ENCODE measurements at regions of chr4 and their contacts with region 1.

Region 1: DNA sequence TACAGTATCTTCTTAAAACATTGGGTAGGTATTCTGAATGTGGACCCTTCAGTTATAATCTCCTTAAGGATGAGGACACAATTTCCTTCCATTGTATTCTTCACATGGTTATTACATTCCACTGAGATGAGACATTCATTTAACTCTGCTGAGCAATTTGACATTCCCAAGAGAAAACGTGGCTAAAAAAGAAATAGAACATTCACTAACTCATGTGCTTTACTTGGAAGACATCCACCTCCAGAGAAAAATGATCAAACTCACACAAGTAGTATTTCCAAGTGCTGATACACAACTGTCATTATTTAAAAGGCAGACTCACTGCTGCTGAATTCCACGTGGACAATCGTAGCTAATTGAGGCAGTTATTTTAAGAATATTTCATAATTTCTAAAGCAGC is 227.9 kb upstream of the ANKRD50 start:
- DNase-seq: no peak
- H3K4me3 Mint-ChIP-seq: no peak overlapping the region
- H3K27ac Mint-ChIP-seq: peak overlapping the region; percentile 36
- H3K4me1 Mint-ChIP-seq: peaks cover 51% of the 10 kb centered on the region
- H3K27me3 Mint-ChIP-seq: no peaks in the 10 kb centered on the region
- CTCF ChIP-seq: no peak

Region 2: DNA sequence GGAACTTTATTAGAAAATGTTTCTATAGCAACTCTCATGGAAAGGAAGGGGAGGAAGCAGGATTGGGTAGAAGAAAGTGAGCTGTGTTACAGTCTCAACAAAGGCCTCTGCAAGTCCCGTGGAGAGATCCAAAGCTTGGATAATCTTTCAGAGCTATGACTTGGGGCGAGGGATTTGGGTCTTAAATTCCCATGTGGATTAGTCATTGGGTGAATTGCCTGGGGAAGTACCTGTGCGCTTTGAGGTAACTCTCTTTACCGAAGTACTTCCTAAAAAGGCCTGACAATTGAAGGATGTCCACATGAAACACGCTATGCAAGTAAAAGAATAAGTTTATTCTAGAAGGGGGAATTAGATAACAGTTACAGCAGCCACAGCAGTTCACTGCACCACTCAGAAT is 94.0 kb before region 1 on chr4:
- CTCF ChIA-PET with region 1: no interaction called
- intact Hi-C with region 1: no loop called
- DNase-seq: no peak
- H3K4me3 Mint-ChIP-seq: no peak overlapping the region
- H3K27ac Mint-ChIP-seq: no peak overlapping the region
- H3K4me1 Mint-ChIP-seq: no peaks in the 10 kb centered on the region
- H3K27me3 Mint-ChIP-seq: no peaks in the 10 kb centered on the region
- CTCF ChIP-seq: no peak

Region 3: GRCh38 chr4:125244848-125245450 is 304.6 kb after region 1 on chr4:
- CTCF ChIA-PET with region 1: no interaction called
- intact Hi-C with region 1: loop called (anchors 10 kb)
- DNase-seq: no peak
- H3K4me3 Mint-ChIP-seq: no peak overlapping the region
- H3K27ac Mint-ChIP-seq: no peak overlapping the region
- H3K4me1 Mint-ChIP-seq: no peaks in the 10 kb centered on the region
- H3K27me3 Mint-ChIP-seq: no peaks in the 10 kb centered on the region
- CTCF ChIP-seq: no peak